PC-9 (cell line): ENCODE measurements at regions of chr3 and their contacts with region 1.

Region 1: DNA sequence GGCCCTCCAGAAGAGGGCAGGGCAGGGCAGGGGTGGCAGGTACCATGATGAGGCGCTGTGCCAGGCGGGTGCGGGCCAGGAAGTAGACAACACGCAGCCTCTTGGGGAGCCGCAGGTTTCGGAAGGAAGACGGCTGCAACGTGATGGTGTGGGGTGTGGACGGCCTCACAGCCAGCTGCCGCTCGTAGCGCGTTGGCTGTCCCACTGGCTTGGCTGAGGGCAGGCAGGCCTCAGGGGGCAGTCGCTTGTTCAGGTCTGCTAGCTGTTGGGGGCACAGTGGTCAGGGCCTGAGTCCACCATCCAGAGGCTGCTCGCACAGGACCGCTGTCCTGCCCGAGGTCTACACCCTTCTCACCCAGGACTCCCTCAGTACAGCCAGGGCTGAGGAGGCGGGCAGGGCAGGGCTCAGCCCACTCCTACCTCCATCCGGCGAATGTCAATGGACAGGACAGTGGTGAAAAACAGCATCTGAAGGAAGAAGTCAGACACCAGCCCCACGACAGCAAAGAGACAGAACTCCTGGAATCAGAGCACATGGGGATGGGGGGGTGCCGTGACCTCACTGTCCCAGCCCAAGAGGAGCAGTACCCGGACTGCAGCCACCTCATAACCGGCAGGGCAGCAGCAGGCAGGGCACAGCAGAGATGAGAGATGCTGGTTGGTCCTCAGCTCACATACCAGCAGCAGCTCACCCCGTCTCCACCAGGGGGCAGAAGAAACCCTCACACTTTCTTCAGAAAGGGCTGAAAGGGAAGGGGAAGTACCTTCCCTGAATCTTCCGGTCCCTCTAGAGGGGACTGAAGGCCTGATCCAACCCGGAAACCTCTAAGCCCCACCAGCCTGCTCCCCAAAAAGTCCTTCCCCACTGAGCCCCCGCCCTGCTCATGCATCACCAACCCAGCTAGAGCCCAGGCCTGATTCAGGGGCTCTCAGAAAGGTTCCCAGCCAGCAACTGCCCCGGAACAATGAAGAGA is 40.0 kb downstream of the PTPN23 start:
- DNase-seq: peak; percentile 74 to 84
- H3K4me3 ChIP-seq: no peak overlapping the region
- H3K27ac ChIP-seq: no peak overlapping the region
- H3K4me1 ChIP-seq: no peaks in the 10 kb centered on the region
- H3K27me3 ChIP-seq: no peaks in the 10 kb centered on the region
- CTCF ChIP-seq: peak; percentile 88

Region 2: GRCh38 chr3:46086083-46086437 is 1334.7 kb before region 1 on chr3:
- CTCF ChIA-PET with region 1: interaction called, 13 read pairs
- POLR2A ChIA-PET with region 1: no interaction called
- intact Hi-C with region 1: no loop called
- DNase-seq: no peak
- H3K4me3 ChIP-seq: no peak overlapping the region
- H3K27ac ChIP-seq: no peak overlapping the region
- H3K4me1 ChIP-seq: peaks cover 69% of the 10 kb centered on the region
- H3K27me3 ChIP-seq: no peaks in the 10 kb centered on the region
- CTCF ChIP-seq: no peak

Region 3: GRCh38 chr3:47016934-47017435 is 403.8 kb before region 1 on chr3:
- CTCF ChIA-PET with region 1: no interaction called
- POLR2A ChIA-PET with region 1: no interaction called
- intact Hi-C with region 1: no loop called
- DNase-seq: no peak
- H3K4me3 ChIP-seq: no peak overlapping the region
- H3K27ac ChIP-seq: no peak overlapping the region
- H3K4me1 ChIP-seq: no peaks in the 10 kb centered on the region
- H3K27me3 ChIP-seq: no peaks in the 10 kb centered on the region
- CTCF ChIP-seq: no peak

Region 4: DNA sequence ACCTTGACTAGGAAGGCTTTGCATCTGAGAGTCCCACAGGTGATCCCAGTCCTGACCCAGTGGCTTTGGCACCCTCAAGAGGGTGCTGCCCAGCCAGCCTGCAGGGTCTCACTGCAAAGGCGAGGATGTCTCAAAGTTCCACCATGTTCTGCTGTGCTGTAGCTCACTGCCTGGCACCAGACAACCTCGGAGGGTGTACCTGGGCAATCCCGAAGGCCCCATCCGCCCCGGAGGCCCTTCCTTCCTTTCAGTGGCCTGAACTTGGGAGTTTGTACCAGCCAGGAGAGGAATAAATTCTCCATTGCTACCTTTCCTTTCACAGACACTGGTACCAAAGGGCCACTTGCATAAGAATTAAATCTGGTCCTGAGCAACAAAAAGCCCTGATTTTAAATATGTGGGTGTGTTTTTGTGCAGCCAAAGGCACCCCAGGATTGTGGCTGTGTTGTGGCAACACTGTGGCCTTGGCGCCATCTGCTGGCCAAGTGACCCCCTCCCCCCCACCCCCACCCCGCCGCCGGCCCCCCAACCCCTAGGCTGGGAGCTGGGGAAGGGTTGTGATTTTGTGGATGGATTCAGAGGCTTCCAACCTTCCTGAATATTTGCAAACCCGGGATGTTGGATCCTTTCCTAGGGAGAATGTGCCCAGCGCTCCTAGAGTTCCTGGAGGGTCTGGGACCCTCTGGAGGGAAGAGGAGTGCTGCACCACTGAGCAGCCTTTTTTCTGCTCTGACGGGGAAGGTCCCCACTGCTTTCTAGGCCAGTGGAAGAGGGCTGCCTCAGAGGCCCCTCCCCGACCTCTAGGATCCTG is 49.7 kb before region 1 on chr3:
- CTCF ChIA-PET with region 1: no interaction called
- POLR2A ChIA-PET with region 1: no interaction called
- intact Hi-C with region 1: no loop called
- DNase-seq: no peak
- H3K4me3 ChIP-seq: no peak overlapping the region
- H3K27ac ChIP-seq: no peak overlapping the region
- H3K4me1 ChIP-seq: no peaks in the 10 kb centered on the region
- H3K27me3 ChIP-seq: no peaks in the 10 kb centered on the region
- CTCF ChIP-seq: no peak; the same call in 1 of the 2 replicates

Region 5: DNA sequence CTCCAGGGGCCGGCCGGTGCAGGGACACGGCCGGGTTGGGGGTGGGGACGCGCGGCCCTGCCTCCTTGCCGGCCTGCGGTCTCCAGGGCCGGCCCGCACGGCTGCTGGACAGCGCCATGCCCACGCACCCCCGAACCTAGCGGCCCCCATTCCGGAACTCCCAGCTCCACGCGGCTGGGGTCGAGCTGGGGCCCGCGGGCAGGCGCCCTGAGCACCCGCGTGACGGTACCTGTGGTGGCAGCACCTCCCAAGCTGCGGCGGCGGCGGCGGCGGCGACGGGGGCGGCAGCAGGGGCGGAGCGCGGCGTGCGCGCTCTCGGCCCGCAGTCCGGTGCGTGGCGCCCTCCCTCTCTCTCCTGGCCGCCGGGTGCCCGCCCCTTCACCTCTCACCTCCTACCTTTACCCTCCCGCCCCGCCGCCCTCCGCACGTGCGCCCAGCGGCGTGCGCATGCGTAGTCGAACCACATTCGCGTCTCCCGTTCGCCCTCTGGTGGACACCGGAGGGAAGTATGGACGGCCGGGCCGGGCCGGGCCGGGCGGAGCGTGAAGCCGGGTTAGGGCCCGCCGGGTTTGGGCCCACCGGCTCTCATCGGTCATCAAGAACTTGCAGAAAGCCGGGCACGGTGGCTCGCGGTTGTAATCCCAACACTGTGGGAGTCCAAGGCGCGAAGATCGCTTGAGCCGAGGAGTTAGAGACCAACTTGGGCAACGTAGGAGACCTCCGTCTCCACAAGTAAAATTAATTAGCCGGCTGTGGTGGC is 55.0 kb after region 1 on chr3 and contains the start of gene SCAP:
- CTCF ChIA-PET with region 1: interaction called, 7 read pairs
- POLR2A ChIA-PET with region 1: no interaction called
- intact Hi-C with region 1: loop called (anchors 1 kb)
- DNase-seq: peak; percentile 67 to 94
- H3K4me3 ChIP-seq: peak within 1 kb of the TSS; percentile 94
- H3K27ac ChIP-seq: peak within 1 kb of the TSS; percentile 24; the same call in 1 of the 2 replicates
- H3K4me1 ChIP-seq: peaks cover 6% of the 10 kb centered on the region; the same call in 1 of the 2 replicates
- H3K27me3 ChIP-seq: no peaks in the 10 kb centered on the region
- CTCF ChIP-seq: peak; percentile 86
- total RNA-seq, gene SCAP: 71.5 and 85.0 TPM in 2 replicates

Region 6: GRCh38 chr3:47513125-47513929 is 92.5 kb after region 1 on chr3 and contains the start of gene ELP6:
- CTCF ChIA-PET with region 1: interaction called, 3 read pairs
- POLR2A ChIA-PET with region 1: no interaction called
- intact Hi-C with region 1: loop called (anchors 2 kb)
- DNase-seq: peak; percentile 83 to 96
- H3K4me3 ChIP-seq: peak within 1 kb of the TSS; percentile 68
- H3K27ac ChIP-seq: peak within 1 kb of the TSS; percentile 55
- H3K4me1 ChIP-seq: peaks cover 5% of the 10 kb centered on the region; the same call in 1 of the 2 replicates
- H3K27me3 ChIP-seq: no peaks in the 10 kb centered on the region
- CTCF ChIP-seq: peak; percentile 55
- total RNA-seq, gene ELP6: 38.8 and 39.6 TPM in 2 replicates

Region 7: DNA sequence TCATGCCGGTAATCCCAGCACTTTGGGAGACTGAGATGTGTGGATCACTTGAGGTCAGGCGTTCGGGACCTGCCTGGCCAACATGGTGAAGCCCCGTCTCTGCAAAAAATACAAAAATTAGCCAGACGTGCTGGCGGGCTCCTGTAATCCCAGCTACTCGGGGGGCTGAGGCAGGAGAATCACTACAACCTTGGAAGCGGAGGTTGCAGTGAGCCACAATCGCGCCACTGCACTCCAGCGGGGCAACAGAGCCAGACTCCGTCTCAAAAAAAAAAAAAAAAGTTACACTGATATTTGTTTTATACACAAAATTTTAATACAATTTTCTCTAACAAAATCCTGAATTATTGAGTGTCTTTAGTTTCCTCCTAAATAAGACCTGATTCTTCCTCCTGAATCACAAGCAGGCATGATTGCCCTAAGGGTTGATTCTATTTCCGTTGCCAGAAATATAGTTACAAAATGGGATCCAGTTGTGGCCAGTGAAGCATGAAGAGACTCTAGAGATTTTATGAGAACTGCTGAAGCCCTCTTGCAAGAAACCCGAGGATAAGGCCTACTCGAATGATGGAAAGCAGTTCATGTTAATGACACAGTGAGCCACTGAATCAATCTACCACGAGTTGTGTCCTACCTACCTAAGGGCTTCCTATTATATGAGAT is 370.5 kb after region 1 on chr3:
- CTCF ChIA-PET with region 1: no interaction called
- POLR2A ChIA-PET with region 1: no interaction called
- intact Hi-C with region 1: loop called (anchors 1 kb)
- DNase-seq: no peak
- H3K4me3 ChIP-seq: no peak overlapping the region
- H3K27ac ChIP-seq: no peak overlapping the region
- H3K4me1 ChIP-seq: no peaks in the 10 kb centered on the region
- H3K27me3 ChIP-seq: no peaks in the 10 kb centered on the region
- CTCF ChIP-seq: no peak